Cardiac septum (tissue), 1 donor: ENCODE measurements at regions of chr21 and their contacts with region 1.

Region 1: GRCh38 chr21:42299324-42300044 is 15.7 kb downstream of the TFF3 start:
- DNase-seq: no peak

Region 2: DNA sequence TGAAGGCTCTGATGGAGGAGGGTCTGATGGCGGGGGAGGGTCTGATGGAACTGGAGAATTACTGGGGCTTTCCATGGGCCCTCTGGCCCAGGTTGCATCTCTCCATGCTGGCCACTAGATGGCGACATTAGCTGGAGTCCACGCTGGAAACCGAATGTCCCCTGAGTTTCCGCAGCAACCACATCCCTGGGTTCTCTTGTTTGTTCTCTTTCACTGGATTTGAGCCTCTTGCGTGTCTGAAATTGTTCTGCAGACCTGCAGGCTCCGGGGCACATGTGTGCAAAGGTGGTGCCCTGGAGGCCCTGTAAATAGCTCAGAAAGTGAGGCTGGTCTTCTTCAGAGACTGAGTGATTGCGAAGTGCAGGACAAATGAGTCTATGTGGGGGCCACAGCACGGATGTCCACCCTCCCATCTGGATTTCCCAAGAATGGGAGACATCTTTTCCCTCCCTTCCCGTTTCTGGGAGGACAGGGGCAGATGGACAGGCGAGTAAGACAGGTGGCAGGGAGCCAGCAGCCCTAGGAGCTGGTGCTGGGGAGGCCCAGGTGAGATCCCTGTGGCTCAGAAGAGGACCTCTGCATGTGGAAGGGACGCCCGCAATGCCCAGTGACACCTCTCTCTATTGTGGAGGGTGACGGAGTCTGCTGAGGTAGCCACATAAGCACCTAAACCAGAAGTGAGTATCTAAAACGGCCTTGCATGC is 153.8 kb before region 1 on chr21:
- intact Hi-C with region 1: no loop called
- DNase-seq: peak; percentile 84

Region 3: DNA sequence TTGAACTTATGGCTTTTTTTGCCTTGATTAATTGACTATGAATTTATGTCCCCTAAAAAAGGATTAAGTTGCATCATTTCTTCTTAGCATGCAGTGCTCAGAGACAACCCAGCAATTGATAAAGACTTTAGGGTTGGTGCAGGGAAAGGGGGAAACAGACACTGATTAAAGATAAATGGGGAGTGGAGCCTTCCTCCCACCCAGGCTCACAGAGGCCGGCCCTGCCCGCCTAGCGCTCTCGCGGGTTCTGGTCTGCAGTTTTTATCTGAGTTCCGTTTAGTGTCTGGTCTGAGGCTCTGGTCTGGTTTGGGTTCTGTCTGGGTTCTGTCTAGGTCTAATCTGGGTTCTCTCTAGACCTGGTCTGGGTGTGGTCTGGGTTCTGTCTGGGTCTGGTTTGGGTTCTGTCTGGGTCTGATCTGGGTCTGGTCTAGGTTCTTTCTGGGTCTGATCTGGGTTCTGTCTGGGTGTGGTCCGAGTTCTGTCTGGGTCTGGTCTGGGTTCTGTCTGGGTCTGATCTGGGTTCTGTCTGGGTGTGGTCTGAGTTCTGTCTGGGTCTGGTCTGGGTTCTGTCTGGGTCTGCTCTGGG is 32.4 kb before region 1 on chr21:
- intact Hi-C with region 1: no loop called
- DNase-seq: no peak

Region 4: DNA sequence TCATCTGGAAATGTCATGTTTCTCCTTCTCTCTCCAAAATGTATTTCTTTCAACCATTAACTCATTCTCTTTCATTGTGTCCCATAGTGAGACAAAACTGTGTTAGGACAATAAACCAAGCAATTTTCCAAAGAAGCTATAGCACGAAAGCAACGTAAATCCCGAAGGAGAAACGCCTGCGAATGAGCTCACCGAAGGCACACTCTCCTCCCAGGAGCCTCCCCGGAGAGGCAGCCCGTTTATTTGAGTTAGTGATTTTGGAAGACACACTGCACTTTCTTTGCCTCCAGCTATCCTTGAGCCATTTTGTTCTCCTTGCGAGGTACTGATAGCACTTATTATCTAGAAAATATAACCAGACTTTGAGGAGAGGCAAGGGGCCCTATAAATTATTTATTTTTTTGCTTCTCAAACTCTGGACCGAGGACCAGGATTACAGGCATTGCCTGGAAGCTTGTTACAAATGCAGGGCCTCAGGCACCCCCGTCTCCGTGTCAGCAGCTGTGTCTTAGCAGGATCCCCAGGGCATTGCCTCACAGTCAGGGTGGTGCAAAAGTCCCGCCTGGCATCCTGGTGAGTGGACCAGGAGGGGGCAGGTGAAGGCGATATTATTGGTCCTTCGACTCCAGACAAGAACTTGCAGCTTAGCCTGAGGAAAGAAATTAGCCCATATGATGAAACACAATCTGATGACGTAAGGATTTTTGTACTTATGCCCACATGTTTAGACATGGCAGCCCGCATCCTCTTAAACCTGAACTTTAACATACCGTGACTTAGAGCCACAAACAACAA is 155.5 kb after region 1 on chr21:
- intact Hi-C with region 1: loop called (anchors 5 kb)
- DNase-seq: peak; percentile 38

Region 5: GRCh38 chr21:42561762-42562650 is 262.5 kb after region 1 on chr21:
- intact Hi-C with region 1: no loop called
- DNase-seq: peak; percentile 35